Activated CD8-positive, alpha-beta memory T cell treated with anti-CD3 and anti-CD28 coated beads, Interleukin-2, amount 10 ng/mL, durations not matched to agents 7 days and 5 days (primary cell): ENCODE measurements at regions of chr6 and their contacts with region 1.

Region 1: GRCh38 chr6:41996997-41997396 is 53.3 kb upstream of the TAF8 start:
- DNase-seq: no peak
- ATAC-seq: no peak
- H3K4me3 Mint-ChIP-seq: no peak overlapping the region
- H3K27ac Mint-ChIP-seq: no peak overlapping the region
- H3K4me1 Mint-ChIP-seq: peaks cover 10% of the 10 kb centered on the region
- H3K27me3 Mint-ChIP-seq: no peaks in the 10 kb centered on the region

Region 2: DNA sequence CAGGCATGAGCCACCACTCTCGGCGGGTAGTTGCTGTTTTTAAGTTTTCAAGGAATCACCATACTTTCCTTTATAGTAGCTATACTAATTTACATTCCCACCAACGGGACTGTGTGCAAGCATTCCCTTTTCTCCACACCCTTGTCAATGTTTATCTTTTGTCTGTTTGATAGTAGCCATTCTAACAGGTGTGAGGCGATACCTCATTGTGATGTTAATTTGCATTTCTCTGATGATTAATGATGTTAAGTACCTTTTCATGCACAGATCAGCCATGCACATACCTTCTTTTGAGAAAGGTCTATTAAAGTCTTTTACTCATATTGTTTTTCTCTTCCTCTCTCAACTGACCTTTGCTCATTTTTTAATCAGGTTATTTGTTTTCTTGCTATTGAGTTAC is 12.4 kb before region 1 on chr6:
- CTCF ChIA-PET with region 1: interaction called, 10 read pairs
- DNase-seq: no peak
- ATAC-seq: no peak
- H3K4me3 Mint-ChIP-seq: no peak overlapping the region
- H3K27ac Mint-ChIP-seq: no peak overlapping the region
- H3K4me1 Mint-ChIP-seq: peaks cover 17% of the 10 kb centered on the region
- H3K27me3 Mint-ChIP-seq: no peaks in the 10 kb centered on the region

Region 3: GRCh38 chr6:42028234-42029061 is 31.5 kb after region 1 on chr6:
- CTCF ChIA-PET with region 1: no interaction called
- DNase-seq: no peak
- ATAC-seq: peak; percentile 69
- H3K4me3 Mint-ChIP-seq: peak overlapping the region; percentile 18
- H3K27ac Mint-ChIP-seq: peak overlapping the region; percentile 84
- H3K4me1 Mint-ChIP-seq: peaks cover 80% of the 10 kb centered on the region
- H3K27me3 Mint-ChIP-seq: no peaks in the 10 kb centered on the region